Activated T-helper 1 cell treated with anti-CD3 and anti-CD28 coated beads, Interleukin-12 subunit alpha, Interleukin-12 subunit beta, Interleukin-2, Interleukin-4 antibody, amounts not matched to agents 30 ng/mL and 10 ng/mL and 1 ng/mL, durations not matched to agents 14 hours and 24 hours and 36 hours (primary cell): ENCODE measurements at regions of chr17 and their contacts with region 1.

Region 1: DNA sequence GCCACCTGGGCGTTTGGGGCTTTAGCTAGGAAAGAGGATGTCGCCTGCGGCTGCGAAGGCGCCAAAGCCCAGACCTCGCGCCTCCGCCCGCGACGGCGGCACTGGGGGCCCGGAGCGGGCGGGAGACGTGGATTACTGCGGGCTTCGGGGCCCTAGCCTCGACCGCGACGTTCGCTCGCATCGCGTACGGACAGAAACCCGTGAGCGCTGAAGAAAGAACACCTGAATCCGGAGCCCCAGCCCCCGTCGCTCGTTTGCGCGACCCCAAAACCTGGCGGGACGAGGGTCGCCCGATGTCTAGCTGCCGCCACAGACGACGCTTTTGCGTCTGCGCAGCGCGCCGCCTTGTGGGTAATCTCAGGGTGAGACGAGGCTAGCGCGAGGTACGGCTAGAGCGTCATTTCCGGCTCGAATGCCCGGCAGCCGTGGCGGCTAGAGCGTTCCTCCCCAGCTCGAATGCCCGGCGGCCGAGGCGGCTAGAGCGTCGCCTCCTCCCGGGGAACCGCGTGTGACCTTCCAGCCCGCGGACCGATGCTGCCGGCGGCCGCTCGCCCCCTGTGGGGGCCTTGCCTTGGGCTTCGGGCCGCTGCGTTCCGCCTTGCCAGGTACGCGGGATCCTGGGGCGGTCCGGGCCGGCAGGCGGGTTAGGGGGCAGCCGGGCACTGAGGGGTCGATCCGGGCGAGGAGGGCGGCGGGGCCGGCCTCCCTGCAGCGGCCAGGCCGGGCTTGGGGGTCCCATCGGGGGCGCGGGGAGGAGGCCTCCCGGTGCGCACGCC is at the start of gene MRPL12:
- DNase-seq: peak; percentile 87
- H3K4me3 Mint-ChIP-seq: peak within 1 kb of the TSS; percentile 98
- H3K27ac Mint-ChIP-seq: peak within 1 kb of the TSS; percentile 97
- H3K4me1 Mint-ChIP-seq: peaks cover 18% of the 10 kb centered on the region
- H3K27me3 Mint-ChIP-seq: no peaks in the 10 kb centered on the region
- total RNA-seq, gene MRPL12: 232 TPM in 2 replicates

Region 2: DNA sequence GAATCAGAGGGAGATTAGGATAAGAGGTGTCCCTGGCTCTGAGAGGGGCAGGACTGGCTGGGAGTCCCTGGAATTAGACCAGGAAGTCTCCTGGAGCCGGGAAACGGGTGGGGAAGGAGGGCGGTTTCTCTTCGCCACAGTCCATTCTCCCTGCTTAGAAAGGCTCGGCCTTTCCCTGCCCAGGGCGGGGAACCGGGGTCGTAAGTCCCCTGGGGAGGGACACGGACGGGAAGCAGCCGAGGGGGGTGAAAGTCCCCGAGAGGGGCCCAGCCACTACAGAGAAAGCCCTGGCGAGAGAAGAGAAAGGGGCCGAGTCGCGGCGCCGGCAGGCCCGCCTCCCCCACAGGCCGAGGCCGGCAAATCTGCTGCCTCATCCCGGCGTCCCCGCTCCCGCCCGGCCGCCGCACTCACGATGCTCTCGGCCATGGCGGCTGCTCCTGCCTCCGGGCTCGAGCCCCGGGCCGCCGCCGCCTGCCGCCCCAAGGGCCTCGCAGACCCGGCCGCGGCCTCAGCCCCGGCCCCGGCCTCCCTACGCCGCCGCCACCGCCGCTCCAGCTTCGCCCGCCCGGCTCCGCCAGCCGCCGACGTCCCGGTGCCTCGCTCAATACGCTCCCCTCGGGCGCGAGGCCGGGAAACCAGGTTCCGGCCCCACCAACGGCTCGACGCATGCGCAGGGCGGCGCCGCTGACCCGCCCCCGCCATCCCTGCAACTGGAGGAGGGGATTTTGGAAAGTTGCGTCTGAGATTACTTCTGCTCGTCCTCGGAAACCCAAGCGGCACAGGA is 66.5 kb before region 1 on chr17 and contains the starts of genes NPLOC4 and TSPAN10:
- intact Hi-C with region 1: loop called (anchors 2 kb)
- DNase-seq: peak; percentile 81
- H3K4me3 Mint-ChIP-seq: peak within 1 kb of the TSS; percentile 92
- H3K27ac Mint-ChIP-seq: peak within 1 kb of the TSS; percentile 80
- H3K4me1 Mint-ChIP-seq: peaks cover 16% of the 10 kb centered on the region
- H3K27me3 Mint-ChIP-seq: peaks cover 5% of the 10 kb centered on the region
- total RNA-seq, gene NPLOC4: 138 and 157 TPM in 2 replicates
- total RNA-seq, gene TSPAN10: 0.21 and 0.66 TPM in 2 replicates